ENCODE measurements at regions of chr15 and their contacts with region 1.

Region 1: DNA sequence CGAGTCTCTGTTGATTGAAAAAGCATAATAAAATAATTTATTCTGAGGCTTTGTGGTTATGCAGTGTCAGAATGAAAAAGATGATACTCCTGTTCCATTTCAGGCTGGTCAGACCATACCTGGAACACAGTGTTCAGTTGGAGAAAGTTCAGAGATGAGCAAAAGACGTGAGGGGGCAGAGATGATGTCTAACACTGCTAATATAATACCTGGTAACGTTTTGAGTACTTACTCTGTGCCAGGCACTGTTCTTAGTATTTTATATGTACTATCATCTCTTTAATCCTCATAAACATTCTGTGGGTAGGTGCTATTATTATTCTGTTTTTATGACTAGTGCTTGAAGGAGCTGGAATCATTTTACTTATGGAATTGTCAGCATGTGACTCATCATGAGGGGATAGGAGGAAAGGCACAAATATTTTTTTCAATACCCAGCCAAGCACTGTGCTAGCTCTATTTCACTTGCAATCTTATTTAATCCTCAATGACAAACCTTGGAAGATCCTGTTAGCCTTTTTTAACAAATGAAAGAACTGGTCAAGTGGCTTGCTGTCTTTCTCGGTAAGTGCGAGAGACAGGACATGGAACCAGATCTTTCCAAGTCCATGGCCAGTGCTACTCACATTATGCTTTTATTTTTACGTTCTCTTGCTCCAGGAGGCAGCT is 31.8 kb downstream of the IQGAP1 start:
- DNase-seq: no peak
- H3K4me3 Mint-ChIP-seq: peak overlapping the region; percentile 56
- H3K27ac Mint-ChIP-seq: peak overlapping the region; percentile 96
- H3K4me1 Mint-ChIP-seq: peaks cover 70% of the 10 kb centered on the region
- H3K27me3 Mint-ChIP-seq: no peaks in the 10 kb centered on the region

Region 2: GRCh38 chr15:89492111-89492641 is 927.7 kb before region 1 on chr15:
- intact Hi-C with region 1: no loop called
- DNase-seq: no peak
- H3K4me3 Mint-ChIP-seq: no peak overlapping the region
- H3K27ac Mint-ChIP-seq: no peak overlapping the region
- H3K4me1 Mint-ChIP-seq: no peaks in the 10 kb centered on the region
- H3K27me3 Mint-ChIP-seq: peaks cover 33% of the 10 kb centered on the region

Region 3: DNA sequence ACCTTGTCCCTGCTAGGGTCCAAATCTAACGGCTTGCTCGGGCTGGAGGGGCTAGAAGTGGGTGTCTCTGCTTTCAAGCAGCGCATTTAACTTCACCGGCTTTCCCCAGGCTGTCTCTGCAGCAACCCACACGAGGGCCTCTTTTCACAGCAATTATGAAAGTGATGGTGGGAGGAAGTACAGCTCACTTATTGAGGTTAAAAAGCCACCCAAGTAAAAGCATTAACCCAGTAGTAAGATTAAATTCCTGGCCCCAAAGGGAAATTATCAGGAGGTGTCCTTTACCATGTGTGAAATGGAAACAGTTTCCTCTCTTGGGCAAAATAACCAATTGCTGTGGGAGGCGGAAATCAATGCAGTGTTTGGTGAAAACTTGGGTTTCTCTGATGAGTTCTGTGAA is 113.3 kb before region 1 on chr15:
- intact Hi-C with region 1: loop called (anchors 1 kb)
- DNase-seq: peak; percentile 30
- H3K4me3 Mint-ChIP-seq: peak overlapping the region; percentile 63
- H3K27ac Mint-ChIP-seq: peak overlapping the region; percentile 80
- H3K4me1 Mint-ChIP-seq: peaks cover 44% of the 10 kb centered on the region
- H3K27me3 Mint-ChIP-seq: peaks cover 2% of the 10 kb centered on the region

Region 4: DNA sequence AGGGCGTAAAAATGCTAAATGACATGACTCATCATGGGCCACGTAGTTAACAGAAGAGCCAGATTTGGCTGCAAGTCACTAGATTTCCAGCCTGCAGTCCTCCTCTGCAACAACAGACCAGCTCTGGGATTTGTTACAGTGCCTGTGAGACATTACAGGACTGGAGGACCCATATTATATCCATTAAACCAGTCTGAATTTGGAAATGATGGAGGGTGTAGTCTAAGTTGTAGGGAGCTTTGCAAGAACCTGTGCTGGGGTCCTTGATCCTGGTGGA is 57.0 kb before region 1 on chr15:
- intact Hi-C with region 1: loop called (anchors 1 kb)
- DNase-seq: no peak
- H3K4me3 Mint-ChIP-seq: peak overlapping the region; percentile 31
- H3K27ac Mint-ChIP-seq: peak overlapping the region; percentile 50
- H3K4me1 Mint-ChIP-seq: peaks cover 36% of the 10 kb centered on the region
- H3K27me3 Mint-ChIP-seq: no peaks in the 10 kb centered on the region

Region 5: DNA sequence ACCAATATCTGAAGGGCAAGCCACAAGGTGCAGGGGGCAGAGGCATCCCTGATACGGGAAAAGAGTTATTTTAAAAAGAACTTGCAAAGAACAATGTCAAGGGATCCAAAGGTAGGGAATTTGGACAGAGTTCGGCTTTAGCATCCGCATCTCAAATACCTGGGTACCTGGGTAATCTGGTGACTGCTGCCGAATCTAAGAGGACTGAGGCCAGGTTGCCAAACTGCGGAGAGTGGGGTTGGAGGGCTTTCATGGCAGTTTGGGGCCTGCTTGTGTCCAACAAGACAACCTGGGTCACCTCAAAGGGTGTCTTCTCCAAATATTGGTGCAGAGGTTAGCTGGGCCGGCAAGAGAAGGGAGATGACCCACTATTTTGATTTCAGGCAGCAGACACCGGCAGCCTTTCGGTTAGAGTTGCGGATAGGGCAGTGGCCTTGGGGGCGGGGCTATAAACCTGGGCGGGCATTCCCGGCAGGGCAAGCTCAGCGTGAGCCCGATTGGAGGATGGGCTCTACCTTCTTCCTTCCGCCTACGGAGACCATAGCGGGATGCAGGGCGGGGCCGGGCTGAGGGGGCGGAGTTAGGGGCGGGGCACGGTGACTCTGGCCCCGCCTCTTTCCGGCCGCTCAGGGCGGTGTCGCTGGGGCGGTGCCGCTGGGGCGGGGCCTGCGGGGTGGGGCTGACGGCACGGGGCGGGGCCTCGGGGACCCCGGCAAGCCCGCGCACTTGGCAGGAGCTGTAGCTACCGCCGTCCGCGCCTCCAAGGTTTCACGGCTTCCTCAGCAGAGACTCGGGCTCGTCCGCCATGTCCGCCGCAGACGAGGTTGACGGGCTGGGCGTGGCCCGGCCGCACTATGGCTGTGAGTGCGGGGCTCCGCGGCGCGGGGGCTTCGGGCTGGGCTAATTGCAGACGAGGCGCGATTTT is 32.1 kb before region 1 on chr15 and contains the start of gene IQGAP1:
- intact Hi-C with region 1: loop called (anchors 1 kb)
- DNase-seq: peak; percentile 96
- H3K4me3 Mint-ChIP-seq: peak within 1 kb of the TSS; percentile 94
- H3K27ac Mint-ChIP-seq: peak within 1 kb of the TSS; percentile 96
- H3K4me1 Mint-ChIP-seq: peaks cover 43% of the 10 kb centered on the region
- H3K27me3 Mint-ChIP-seq: no peaks in the 10 kb centered on the region
- total RNA-seq, gene IQGAP1: 144 and 149 TPM in 2 replicates

Region 6: DNA sequence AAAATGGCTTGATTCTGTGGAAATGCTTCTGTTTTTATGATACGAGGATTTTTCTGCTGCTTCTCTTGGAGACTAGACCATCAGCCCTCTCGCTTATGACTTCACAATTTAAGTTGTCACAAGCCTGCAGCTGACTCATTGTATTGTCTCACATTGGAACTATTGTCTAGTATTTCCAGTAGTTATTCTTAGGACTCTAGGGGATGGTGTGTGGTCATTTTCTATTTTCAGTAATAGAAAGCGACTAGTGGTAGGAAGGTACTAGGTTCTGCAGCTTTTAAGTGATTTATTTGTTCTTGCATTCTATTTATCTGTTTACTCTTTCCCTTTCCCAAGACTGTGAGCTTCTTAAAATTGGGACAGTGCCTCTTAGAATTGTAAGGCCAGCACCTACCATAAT is 43.5 kb after region 1 on chr15:
- intact Hi-C with region 1: loop called (anchors 5 kb)
- DNase-seq: no peak
- H3K4me3 Mint-ChIP-seq: no peak overlapping the region
- H3K27ac Mint-ChIP-seq: peak overlapping the region; percentile 3
- H3K4me1 Mint-ChIP-seq: peaks cover 34% of the 10 kb centered on the region
- H3K27me3 Mint-ChIP-seq: no peaks in the 10 kb centered on the region

Region 7: DNA sequence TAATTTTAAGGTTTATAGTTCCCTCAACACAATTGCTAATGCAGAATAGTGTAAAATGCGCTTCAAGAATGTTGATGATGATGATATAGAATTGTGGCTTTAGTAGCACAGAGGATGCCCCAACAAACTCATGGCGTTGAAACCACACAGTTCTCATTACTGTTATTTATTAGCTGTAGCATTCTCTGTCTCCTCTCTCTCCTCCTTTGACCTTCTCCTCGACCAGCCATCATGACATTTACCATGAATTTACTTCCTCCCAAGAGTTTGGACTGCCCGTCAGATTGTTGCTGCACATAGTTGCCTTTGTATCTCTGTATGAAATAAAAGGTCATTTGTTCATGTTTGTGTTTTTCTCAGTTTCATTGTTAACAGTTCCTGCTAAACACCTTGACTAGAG is 82.0 kb after region 1 on chr15:
- intact Hi-C with region 1: no loop called
- DNase-seq: no peak
- H3K4me3 Mint-ChIP-seq: no peak overlapping the region
- H3K27ac Mint-ChIP-seq: no peak overlapping the region
- H3K4me1 Mint-ChIP-seq: peaks cover 8% of the 10 kb centered on the region
- H3K27me3 Mint-ChIP-seq: no peaks in the 10 kb centered on the region

Region 8: DNA sequence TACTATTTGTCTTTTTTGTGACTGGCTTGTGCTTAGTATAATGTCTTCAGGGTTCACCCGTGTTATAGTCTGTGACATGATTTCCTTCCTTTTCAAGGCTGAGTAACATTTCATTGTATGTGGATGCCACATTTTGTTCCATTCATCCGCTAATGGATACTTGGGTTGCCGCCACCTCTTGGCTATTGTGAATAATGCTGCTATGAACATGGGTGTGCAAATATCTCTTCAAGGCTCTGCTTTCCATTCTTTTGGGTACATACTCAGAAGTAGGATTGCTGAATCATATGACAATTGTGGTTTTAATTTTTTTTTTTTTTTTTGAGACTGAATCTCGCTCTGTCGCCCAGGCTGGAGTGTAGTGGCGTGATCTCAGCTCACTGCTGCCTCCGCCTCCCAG is 125.2 kb after region 1 on chr15:
- intact Hi-C with region 1: no loop called
- DNase-seq: no peak
- H3K4me3 Mint-ChIP-seq: no peak overlapping the region
- H3K27ac Mint-ChIP-seq: peak overlapping the region; percentile 33
- H3K4me1 Mint-ChIP-seq: peaks cover 66% of the 10 kb centered on the region
- H3K27me3 Mint-ChIP-seq: no peaks in the 10 kb centered on the region

Region 9: GRCh38 chr15:90571063-90571541 is 151.2 kb after region 1 on chr15:
- intact Hi-C with region 1: loop called (anchors 5 kb)
- DNase-seq: no peak
- H3K4me3 Mint-ChIP-seq: peak overlapping the region; percentile 38
- H3K27ac Mint-ChIP-seq: peak overlapping the region; percentile 64
- H3K4me1 Mint-ChIP-seq: peaks cover 92% of the 10 kb centered on the region
- H3K27me3 Mint-ChIP-seq: no peaks in the 10 kb centered on the region

Region 10: DNA sequence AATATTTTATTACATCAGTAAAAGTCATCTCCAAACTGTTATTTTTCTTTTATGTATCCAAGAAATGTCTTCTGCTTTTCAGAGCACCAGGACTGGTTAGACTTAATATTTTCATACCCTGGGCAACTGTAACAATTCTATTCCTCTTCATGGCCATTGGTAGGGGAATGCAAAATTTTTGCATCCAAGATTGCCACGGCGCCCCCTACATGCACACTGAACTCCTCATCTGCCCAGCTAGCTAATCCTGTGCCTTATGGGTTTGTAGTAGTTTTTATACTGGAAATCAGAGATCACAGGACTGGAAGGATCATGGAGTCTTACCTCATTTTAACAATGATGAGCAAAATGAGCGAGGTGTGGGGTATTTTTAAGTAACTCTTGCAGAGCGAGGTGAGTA is 184.0 kb after region 1 on chr15:
- intact Hi-C with region 1: no loop called
- DNase-seq: peak; percentile 28
- H3K4me3 Mint-ChIP-seq: no peak overlapping the region
- H3K27ac Mint-ChIP-seq: peak overlapping the region; percentile 67
- H3K4me1 Mint-ChIP-seq: peaks cover 49% of the 10 kb centered on the region
- H3K27me3 Mint-ChIP-seq: no peaks in the 10 kb centered on the region

Measured in activated T-helper 1 cell treated with anti-CD3 and anti-CD28 coated beads, Interleukin-12 subunit alpha, Interleukin-12 subunit beta, Interleukin-2, Interleukin-4 antibody, amounts not matched to agents 30 ng/mL and 10 ng/mL and 1 ng/mL, durations not matched to agents 14 hours and 24 hours and 36 hours (primary cell).